GM12878 (cell line): ENCODE measurements at regions of chr13 and their contacts with region 1.

Region 1: DNA sequence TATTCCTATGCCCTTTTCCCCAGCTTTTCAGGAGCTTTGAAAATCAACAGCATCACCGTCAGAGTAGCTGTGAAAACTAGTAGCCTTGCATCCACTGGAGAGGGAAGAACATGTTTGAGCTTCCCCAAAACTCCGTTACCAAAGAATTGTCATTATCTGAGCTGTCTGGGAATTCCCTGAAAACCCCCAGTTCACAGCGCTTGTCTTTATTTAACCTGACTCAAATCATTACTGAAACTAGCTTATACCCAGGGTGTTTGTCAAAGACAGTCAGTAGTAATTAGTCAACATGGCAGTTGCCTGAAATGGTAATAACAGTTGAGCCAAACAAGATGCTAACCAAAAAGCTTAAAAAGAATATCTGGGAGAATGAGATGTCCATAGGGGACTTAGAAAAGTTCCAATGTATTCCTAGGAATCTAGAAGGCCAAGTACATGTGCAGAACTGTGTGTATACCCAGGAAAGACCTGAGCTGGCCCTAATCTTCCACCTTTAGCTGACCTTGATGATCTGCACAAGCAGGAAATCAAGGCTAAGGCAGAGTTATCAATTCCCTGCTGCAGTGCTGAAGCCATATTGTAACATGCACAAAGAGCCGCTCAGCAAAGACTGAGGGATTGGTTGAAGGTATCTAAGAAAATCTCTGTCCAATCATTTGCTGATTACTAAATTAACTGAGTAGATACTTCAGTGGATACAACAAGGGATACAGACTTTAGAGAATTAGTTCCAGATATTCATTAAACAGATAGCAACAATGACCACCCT is 130.8 kb downstream of the KL start:
- DNase-seq: peak; percentile 98
- ATAC-seq: peak; percentile 63
- H3K4me3 ChIP-seq: no peak overlapping the region
- H3K27ac ChIP-seq: peak overlapping the region; percentile 98
- H3K4me1 ChIP-seq: peaks cover 59% of the 10 kb centered on the region
- H3K27me3 ChIP-seq: no peaks in the 10 kb centered on the region
- CTCF ChIP-seq: no peak
- EP300 ChIP-seq: peak; percentile 99
- POLR2A ChIP-seq: no peak
- RAD21 ChIP-seq: peak; percentile 37; the same call in 1 of the 2 replicates

Region 2: GRCh38 chr13:32838945-32839344 is 308.1 kb before region 1 on chr13:
- CTCF ChIA-PET with region 1: no interaction called
- POLR2A ChIA-PET with region 1: no interaction called
- RAD21 ChIA-PET with region 1: interaction called, 3 read pairs
- SMC1A ChIA-PET with region 1: no interaction called
- in situ Hi-C with region 1: no loop called
- intact Hi-C with region 1: loop called (anchors 5 kb)
- DNase-seq: no peak
- ATAC-seq: peak; percentile 83
- H3K4me3 ChIP-seq: peak overlapping the region; percentile 14; the same call in 1 of the 2 replicates
- H3K27ac ChIP-seq: peak overlapping the region; percentile 84
- H3K4me1 ChIP-seq: peaks cover 40% of the 10 kb centered on the region
- H3K27me3 ChIP-seq: no peaks in the 10 kb centered on the region
- CTCF ChIP-seq: no peak
- EP300 ChIP-seq: peak; percentile 40 to 71; a peak in 1 of 4 replicates
- POLR2A ChIP-seq: no peak
- RAD21 ChIP-seq: 0 out of 2 replicates have a peak, but pooled peaks have one; percentile 8

Region 3: GRCh38 chr13:33105387-33106005 is 41.5 kb before region 1 on chr13:
- CTCF ChIA-PET with region 1: interaction called, 52 read pairs
- POLR2A ChIA-PET with region 1: interaction called, 62 read pairs
- RAD21 ChIA-PET with region 1: interaction called, 80 read pairs
- SMC1A ChIA-PET with region 1: interaction called, 95 read pairs
- in situ Hi-C with region 1: no loop called
- intact Hi-C with region 1: loop called (anchors 2 kb)
- DNase-seq: no peak
- ATAC-seq: peak; percentile 19
- H3K4me3 ChIP-seq: no peak overlapping the region
- H3K27ac ChIP-seq: peak overlapping the region; percentile 63
- H3K4me1 ChIP-seq: peaks cover 49% of the 10 kb centered on the region
- H3K27me3 ChIP-seq: no peaks in the 10 kb centered on the region
- CTCF ChIP-seq: no peak
- EP300 ChIP-seq: no peak
- POLR2A ChIP-seq: no peak
- RAD21 ChIP-seq: no peak

Region 4: DNA sequence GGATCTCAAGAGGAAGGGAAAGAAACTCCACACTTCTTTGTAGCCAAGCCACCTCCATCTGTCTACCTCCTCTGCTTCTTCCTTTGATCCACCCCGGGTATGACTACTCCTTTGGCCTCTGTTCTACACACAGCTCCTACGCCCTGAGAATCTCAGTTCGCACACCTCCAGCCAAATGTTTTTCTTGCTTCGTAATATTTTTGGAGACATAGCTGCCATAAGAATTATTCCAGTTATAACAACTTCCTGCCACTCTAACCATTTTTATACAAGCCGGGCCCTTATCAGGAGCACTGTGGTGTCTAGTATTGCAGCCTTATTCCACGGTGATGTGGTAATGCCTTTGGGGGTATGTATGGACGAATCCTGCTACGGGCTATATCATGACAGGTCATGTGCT is 11.8 kb after region 1 on chr13:
- CTCF ChIA-PET with region 1: interaction called, 10 read pairs
- POLR2A ChIA-PET with region 1: interaction called, 5 read pairs
- RAD21 ChIA-PET with region 1: interaction called, 10 read pairs
- SMC1A ChIA-PET with region 1: interaction called, 10 read pairs
- in situ Hi-C with region 1: no loop called
- intact Hi-C with region 1: no loop called
- DNase-seq: no peak
- ATAC-seq: no peak
- H3K4me3 ChIP-seq: no peak overlapping the region
- H3K27ac ChIP-seq: no peak overlapping the region
- H3K4me1 ChIP-seq: no peaks in the 10 kb centered on the region
- H3K27me3 ChIP-seq: no peaks in the 10 kb centered on the region
- CTCF ChIP-seq: no peak
- EP300 ChIP-seq: no peak
- POLR2A ChIP-seq: no peak
- RAD21 ChIP-seq: no peak

Region 5: GRCh38 chr13:33194820-33195692 is 48.0 kb after region 1 on chr13:
- CTCF ChIA-PET with region 1: interaction called, 36 read pairs
- POLR2A ChIA-PET with region 1: interaction called, 343 read pairs
- RAD21 ChIA-PET with region 1: interaction called, 231 read pairs
- SMC1A ChIA-PET with region 1: interaction called, 832 read pairs
- in situ Hi-C with region 1: no loop called
- intact Hi-C with region 1: loop called (anchors 1 kb)
- DNase-seq: peak; percentile 99
- ATAC-seq: peak; percentile 71
- H3K4me3 ChIP-seq: peak overlapping the region; percentile 54
- H3K27ac ChIP-seq: peak overlapping the region; percentile 92
- H3K4me1 ChIP-seq: peaks cover 29% of the 10 kb centered on the region
- H3K27me3 ChIP-seq: no peaks in the 10 kb centered on the region
- CTCF ChIP-seq: no peak
- EP300 ChIP-seq: peak; percentile 71 to 95
- POLR2A ChIP-seq: no peak
- RAD21 ChIP-seq: 0 out of 2 replicates have a peak, but pooled peaks have one; percentile 24

Region 6: GRCh38 chr13:33409673-33410510 is 262.9 kb after region 1 on chr13:
- CTCF ChIA-PET with region 1: no interaction called
- POLR2A ChIA-PET with region 1: no interaction called
- RAD21 ChIA-PET with region 1: no interaction called
- SMC1A ChIA-PET with region 1: no interaction called
- in situ Hi-C with region 1: no loop called
- intact Hi-C with region 1: no loop called
- DNase-seq: no peak
- ATAC-seq: no peak
- H3K4me3 ChIP-seq: no peak overlapping the region
- H3K27ac ChIP-seq: no peak overlapping the region
- H3K4me1 ChIP-seq: no peaks in the 10 kb centered on the region
- H3K27me3 ChIP-seq: no peaks in the 10 kb centered on the region
- CTCF ChIP-seq: no peak
- EP300 ChIP-seq: no peak
- POLR2A ChIP-seq: no peak
- RAD21 ChIP-seq: no peak